Motor neuron (in vitro differentiated cells): ENCODE measurements at regions of chr18 and their contacts with region 1.

Region 1: DNA sequence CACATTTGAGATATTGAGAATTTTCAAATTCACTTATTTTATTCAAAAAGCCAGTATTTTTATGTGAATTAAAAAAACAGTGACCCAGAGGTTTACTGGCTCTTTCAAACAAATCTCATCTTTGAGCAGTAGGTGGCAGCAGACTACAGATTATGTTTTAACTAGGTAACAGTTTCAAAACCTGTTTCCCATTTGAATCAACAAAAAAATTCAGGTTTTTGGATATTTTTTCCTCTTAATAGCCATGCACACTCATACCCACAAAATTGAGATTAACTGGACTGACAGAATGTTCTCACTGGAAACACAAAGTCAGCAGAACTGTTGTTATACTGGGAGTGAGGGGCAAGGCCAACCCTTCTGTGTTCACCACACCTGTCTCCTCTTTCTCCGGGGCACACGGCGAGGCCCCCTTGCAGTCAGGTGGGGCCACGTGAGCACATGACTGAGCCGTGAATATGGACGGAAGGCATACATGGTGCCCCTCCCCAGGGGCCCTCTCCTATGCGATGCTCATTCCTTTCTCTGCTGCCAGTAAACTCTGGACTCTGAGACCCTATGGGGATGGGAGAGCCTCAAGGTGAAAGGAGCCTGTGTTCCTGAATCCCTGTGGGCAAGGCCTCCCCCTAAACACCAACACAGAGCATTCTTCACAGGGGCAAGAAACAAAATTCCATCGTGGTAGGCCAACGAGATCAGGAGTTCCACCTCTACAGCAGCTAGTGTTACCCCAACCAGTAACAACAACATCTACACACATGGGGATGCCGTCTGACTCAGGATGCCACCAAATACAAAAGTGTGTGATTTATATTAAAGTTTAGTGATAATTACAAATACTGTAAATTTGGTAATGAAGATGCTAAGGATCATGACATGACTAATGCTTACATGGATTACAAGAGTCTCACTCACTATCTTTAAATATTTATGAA is 80.4 kb downstream of the LPIN2 start:
- ATAC-seq: peak in 6 of 8 experiments; percentile 18 to 65 (median 46)
- H3K4me3 ChIP-seq: no peak overlapping the region
- H3K27ac ChIP-seq: no peak overlapping the region
- H3K4me1 ChIP-seq: no peaks in the 10 kb centered on the region

Region 2: GRCh38 chr18:2704541-2704940 is 228.0 kb before region 1 on chr18:
- in situ Hi-C with region 1: no loop called
- ATAC-seq: no peak
- H3K4me3 ChIP-seq: no peak overlapping the region
- H3K27ac ChIP-seq: no peak overlapping the region
- H3K4me1 ChIP-seq: no peaks in the 10 kb centered on the region

Region 3: DNA sequence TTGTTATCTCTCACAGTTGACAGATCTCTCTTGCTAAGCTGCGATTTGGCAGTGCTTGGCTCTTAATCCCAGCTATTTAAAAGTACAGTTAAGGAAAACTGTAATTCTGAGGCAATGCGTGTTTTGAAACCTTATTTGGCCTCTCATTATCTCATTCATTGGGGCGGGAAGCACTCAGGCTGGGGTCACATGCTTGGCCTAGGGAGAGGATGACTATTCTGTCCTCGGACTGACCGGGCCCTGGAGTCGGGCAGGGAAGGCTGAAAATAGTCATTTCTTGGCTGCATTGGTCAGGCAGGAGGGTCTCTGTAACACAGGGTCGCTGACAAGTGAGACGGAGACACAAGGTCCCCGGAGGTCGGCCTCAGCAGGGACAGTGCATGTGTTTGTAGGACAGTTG is 105.9 kb before region 1 on chr18:
- in situ Hi-C with region 1: no loop called
- ATAC-seq: peak in 3 of 8 experiments; percentile 20 to 95 (median 81)
- H3K4me3 ChIP-seq: no peak overlapping the region
- H3K27ac ChIP-seq: no peak overlapping the region
- H3K4me1 ChIP-seq: no peaks in the 10 kb centered on the region

Region 4: DNA sequence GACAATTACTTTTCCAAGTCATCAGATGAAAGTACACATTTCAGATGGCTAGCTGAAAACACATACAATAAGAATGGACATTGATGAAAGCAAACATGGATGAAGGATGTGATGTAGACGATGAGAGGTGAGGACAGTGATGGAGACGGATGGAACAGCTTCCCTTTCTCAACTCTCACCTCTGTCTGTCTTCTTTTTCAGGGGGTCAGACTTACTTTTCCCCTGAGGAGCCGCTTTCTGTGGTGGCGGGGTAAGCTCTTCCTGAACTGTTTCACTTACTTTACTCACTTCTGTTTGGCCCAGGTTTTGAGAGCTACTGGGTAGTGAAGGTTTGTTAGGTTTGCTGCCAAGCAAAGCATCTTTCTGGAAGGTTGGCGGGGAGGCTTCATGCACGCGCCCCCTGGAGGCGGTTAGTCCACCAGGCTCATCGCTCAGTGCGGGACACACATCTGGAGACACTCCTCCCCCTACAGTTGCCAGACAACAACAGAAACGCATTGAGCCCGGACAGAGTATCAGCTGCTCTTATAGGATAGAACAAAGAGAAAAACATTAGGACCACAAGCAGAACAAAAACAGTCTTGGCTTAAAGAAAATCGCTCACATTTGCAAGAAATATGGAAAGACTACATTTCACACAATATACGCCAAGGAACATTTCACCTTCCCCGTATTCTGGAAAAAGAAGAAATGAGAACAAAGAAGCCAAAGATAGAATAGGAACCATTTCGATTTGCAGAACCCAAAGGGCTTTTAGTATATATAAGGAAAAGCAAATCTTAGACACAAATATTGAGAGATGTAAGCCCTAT is 196.7 kb after region 1 on chr18:
- in situ Hi-C with region 1: loop called in 5 of 9 experiments (anchors 25 kb)
- ATAC-seq: peak; percentile 90 to 100 (median 99)
- H3K4me3 ChIP-seq: no peak overlapping the region
- H3K27ac ChIP-seq: no peak overlapping the region
- H3K4me1 ChIP-seq: peaks cover 0 to 2% of the 10 kb centered on the region in 2 donors

Region 5: DNA sequence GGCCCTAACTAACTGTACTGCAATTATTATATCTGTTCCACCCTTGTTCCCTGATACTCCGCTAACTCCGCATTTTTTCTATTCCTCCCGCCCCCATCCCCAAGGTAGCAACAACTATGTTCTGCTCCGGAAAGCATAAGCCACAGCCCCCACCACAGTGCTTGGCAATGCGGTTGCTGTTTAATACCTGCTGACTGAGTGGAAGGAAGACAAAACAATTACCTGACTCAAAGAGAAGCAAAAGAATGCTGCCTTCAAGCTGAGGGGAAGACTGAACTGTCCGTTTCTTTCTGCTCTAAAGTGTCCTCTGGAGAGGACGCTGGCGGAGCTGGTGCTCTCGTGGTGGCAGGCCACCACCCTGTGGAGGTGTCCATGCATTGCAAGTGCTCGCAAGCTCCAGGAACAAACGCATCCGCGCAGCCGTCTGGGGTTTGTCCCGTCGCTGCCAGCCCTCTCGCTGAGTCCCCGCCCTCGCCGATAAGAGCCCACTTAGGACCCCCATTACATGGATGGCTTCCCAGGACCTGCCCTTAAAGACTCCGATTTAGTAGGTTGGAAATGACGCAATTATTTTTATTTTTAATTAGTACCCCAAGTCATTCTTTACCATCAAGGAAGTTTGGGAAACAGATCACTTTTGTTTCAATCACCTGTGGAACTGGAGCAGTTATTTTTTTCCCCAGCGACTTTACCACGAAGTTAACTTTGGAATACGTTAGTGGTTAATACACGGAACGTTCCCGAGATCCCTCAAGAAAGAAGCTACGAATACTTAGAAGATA is 313.5 kb after region 1 on chr18:
- in situ Hi-C with region 1: loop called in 5 of 9 experiments (anchors 25 kb)
- ATAC-seq: peak; percentile 34 to 64 (median 47)
- H3K4me3 ChIP-seq: peak overlapping the region in 1 of 5 donors; percentile 6
- H3K27ac ChIP-seq: no peak overlapping the region
- H3K4me1 ChIP-seq: peaks cover 2 to 6% of the 10 kb centered on the region in 2 donors